MCF 10A (cell line): ENCODE measurements at regions of chr1 and their contacts with region 1.

Region 1: GRCh38 chr1:184982002-184982954 is 8.0 kb upstream of the NIBAN1 start:
- DNase-seq: peak; percentile 82
- H3K4me3 Mint-ChIP-seq: no peak overlapping the region
- H3K27ac Mint-ChIP-seq: no peak overlapping the region
- H3K4me1 Mint-ChIP-seq: no peaks in the 10 kb centered on the region
- H3K27me3 Mint-ChIP-seq: peaks cover 82% of the 10 kb centered on the region
- CTCF ChIP-seq: peak; percentile 97

Region 2: GRCh38 chr1:184754476-184755225 is 227.6 kb before region 1 on chr1 and contains the start of gene EDEM3:
- CTCF ChIA-PET with region 1: no interaction called
- POLR2A ChIA-PET with region 1: interaction called, 5 read pairs
- intact Hi-C with region 1: loop called (anchors 1 kb)
- DNase-seq: peak; percentile 100
- H3K4me3 Mint-ChIP-seq: peak within 1 kb of the TSS; percentile 93
- H3K27ac Mint-ChIP-seq: peak within 1 kb of the TSS; percentile 96
- H3K4me1 Mint-ChIP-seq: peaks cover 27% of the 10 kb centered on the region
- H3K27me3 Mint-ChIP-seq: no peaks in the 10 kb centered on the region
- CTCF ChIP-seq: no peak
- total RNA-seq, gene EDEM3: 58.3 and 63.5 TPM in 2 replicates

Region 3: DNA sequence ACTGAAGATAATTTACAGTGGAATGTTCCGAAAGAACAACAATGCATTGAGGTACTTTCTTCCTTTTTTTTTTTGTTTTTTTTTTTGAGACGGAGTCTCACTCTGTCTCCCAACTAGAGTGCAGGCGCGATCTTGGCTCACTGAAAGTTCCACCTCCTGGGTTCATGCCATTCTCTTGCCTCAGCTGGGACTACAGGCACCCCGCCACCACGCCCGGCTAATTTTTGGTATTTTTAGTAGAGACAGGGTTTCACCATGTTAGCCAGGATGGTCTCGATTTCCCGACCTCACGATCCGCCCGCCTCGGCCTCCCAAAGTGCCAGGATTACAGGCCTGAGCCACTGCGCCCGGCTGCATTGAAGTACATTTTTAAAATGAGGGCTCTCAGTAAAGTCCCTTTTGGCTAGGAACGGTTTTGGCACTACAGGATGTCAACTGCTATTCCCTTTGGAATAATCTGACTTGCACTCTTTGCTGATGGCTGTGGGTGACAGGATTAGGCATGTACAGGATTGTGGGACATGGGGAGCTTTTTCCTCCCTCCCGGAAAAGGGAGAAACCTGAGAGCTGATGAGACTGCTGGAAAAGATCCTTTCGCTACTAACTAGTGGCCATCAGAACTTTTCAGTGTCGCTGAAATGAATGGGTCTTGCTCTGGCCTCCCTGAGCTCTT is 170.7 kb before region 1 on chr1:
- CTCF ChIA-PET with region 1: interaction called, 270 read pairs
- POLR2A ChIA-PET with region 1: interaction called, 15 read pairs
- intact Hi-C with region 1: no loop called
- DNase-seq: no peak
- H3K4me3 Mint-ChIP-seq: no peak overlapping the region
- H3K27ac Mint-ChIP-seq: no peak overlapping the region
- H3K4me1 Mint-ChIP-seq: no peaks in the 10 kb centered on the region
- H3K27me3 Mint-ChIP-seq: peaks cover 37% of the 10 kb centered on the region
- CTCF ChIP-seq: no peak

Region 4: DNA sequence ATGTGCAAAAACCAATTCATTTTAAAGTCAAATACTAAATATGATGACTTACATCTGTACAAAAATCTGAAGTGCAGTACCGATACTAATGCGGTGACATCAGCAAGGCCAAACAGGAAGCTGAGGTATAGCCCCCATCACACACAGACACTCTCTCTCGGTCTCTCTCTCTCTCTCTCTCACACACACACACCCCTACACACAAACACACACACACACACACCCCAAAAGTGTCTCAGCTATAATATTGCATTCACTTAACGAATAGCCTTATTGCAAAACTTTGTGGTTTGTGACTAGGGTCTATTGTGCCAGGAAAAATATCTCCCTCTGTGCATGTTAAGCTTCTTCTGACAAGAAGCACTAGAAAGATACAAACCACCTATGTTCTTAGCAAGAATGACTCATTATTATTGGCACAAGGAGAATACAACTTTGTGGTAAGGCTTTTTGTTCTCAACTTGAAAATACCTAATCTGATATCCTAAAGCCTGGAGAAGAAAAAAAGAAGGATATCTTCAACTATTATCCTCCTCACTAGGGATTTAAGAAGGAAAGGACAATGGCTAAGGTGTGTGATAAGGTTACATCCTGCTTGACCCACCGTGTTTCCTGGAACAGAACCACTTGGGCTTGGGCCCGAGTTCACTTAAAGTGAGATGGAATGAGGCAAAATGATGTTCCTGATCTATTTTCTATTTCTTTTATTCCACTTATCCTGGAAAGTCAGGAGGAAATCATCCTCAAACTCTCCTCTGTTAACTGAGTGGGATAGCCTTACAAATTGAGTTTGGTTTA is 115.1 kb before region 1 on chr1:
- CTCF ChIA-PET with region 1: interaction called, 10 read pairs
- POLR2A ChIA-PET with region 1: no interaction called
- intact Hi-C with region 1: no loop called
- DNase-seq: peak; percentile 98
- H3K4me3 Mint-ChIP-seq: no peak overlapping the region
- H3K27ac Mint-ChIP-seq: no peak overlapping the region
- H3K4me1 Mint-ChIP-seq: peaks cover 8% of the 10 kb centered on the region
- H3K27me3 Mint-ChIP-seq: peaks cover 100% of the 10 kb centered on the region
- CTCF ChIP-seq: no peak

Region 5: GRCh38 chr1:184954231-184954995 is 27.9 kb before region 1 on chr1:
- CTCF ChIA-PET with region 1: interaction called, 17 read pairs
- POLR2A ChIA-PET with region 1: no interaction called
- intact Hi-C with region 1: no loop called
- DNase-seq: peak; percentile 21
- H3K4me3 Mint-ChIP-seq: no peak overlapping the region
- H3K27ac Mint-ChIP-seq: no peak overlapping the region
- H3K4me1 Mint-ChIP-seq: peaks cover 10% of the 10 kb centered on the region
- H3K27me3 Mint-ChIP-seq: peaks cover 23% of the 10 kb centered on the region
- CTCF ChIP-seq: no peak

Region 6: DNA sequence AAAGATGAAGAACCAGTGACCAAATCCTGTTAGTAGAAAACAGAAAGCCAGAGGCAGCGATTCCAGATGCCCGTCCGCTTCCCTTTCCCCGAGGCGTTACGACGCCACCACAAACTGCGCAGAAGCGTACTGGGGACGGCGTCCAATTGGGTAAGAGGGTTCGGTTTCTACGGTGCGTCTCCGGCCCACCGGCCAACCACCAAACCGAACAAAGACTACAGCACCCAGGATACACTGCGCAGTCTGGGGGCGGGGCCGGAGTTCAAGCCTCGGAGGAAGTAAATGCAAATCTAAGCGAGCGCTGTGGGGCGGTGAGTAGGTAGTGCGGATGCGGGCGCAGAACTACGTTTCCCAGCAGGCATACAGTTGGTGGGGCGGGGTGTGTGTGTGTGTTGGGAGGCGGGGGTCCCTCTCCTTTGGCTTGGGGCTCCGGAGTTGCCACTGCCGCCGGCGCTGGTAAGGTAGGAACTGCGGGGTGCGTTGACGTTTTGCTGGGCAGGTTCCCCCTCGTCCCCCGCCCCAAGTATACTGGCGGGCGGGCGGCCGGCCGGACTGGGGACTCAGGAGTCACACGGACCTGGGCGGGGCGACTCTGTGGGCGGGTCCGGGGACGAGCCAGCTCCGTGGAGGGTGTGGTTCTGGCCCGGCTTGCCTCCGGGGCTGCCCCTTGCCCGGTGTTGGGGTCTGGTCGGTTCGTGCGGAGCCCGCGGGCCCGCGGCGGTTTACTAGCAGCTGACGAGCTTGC is 174.7 kb after region 1 on chr1 and contains the starts of genes SWT1 and TRMT1L:
- CTCF ChIA-PET with region 1: interaction called, 6 read pairs
- POLR2A ChIA-PET with region 1: no interaction called
- intact Hi-C with region 1: loop called (anchors 5 kb)
- DNase-seq: peak; percentile 100
- H3K4me3 Mint-ChIP-seq: peak within 1 kb of the TSS; percentile 83
- H3K27ac Mint-ChIP-seq: peak within 1 kb of the TSS; percentile 98
- H3K4me1 Mint-ChIP-seq: peaks cover 40% of the 10 kb centered on the region
- H3K27me3 Mint-ChIP-seq: no peaks in the 10 kb centered on the region
- CTCF ChIP-seq: no peak
- total RNA-seq, gene SWT1: 2.1 and 6.1 TPM in 2 replicates
- total RNA-seq, gene TRMT1L: 23.4 and 29.3 TPM in 2 replicates

Region 7: DNA sequence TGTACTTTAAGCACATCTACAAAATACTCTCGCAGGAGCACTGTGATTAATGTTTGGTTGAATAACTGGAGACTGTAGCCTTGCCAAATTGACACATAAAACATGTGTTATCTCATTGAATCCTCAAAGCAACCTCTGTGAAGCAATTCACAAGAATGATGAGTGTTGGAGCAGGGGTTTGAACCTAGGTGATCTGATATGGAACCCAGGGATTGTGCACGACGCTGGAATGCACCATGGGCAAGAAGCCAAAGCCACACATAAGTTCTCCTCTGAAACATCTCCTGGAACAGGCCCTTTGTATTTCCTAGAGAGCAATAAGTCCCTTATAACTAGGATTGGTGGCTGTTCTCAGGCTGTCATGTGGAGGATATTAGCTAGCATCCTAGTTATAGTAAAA is 459.3 kb after region 1 on chr1:
- CTCF ChIA-PET with region 1: no interaction called
- POLR2A ChIA-PET with region 1: no interaction called
- intact Hi-C with region 1: no loop called
- DNase-seq: peak; percentile 74
- H3K4me3 Mint-ChIP-seq: no peak overlapping the region
- H3K27ac Mint-ChIP-seq: no peak overlapping the region
- H3K4me1 Mint-ChIP-seq: peaks cover 10% of the 10 kb centered on the region
- H3K27me3 Mint-ChIP-seq: no peaks in the 10 kb centered on the region
- CTCF ChIP-seq: no peak

Region 8: DNA sequence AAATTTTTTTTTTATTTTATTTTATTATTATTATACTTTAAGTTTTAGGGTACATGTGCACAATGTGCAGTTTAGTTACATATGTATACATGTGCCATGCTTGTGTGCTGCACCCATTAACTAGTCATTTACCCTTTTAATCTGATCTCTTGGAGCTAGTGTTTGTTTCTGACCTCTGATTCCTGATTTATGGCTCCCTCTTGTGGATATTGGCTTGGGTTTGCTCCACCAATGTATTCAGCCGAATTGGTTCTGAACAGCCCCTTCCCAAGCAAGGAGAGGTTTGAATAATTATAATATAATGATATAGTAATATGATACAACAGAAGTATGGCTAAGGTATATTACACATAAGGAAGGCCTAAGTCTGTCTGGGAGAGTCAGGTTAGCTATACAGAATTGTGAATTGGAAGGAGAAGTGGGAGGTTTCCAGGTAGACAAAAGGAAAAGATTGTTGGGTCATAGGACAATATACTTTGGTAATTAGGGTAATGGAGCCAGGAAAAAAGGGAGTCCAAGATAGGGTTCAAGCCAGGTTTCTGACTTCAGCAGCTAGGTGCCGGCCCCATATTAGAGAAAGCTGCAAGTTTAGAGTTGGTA is 698.9 kb after region 1 on chr1:
- CTCF ChIA-PET with region 1: interaction called, 6 read pairs
- POLR2A ChIA-PET with region 1: no interaction called
- intact Hi-C with region 1: loop called (anchors 5 kb)
- DNase-seq: peak; percentile 81
- H3K4me3 Mint-ChIP-seq: no peak overlapping the region
- H3K27ac Mint-ChIP-seq: no peak overlapping the region
- H3K4me1 Mint-ChIP-seq: no peaks in the 10 kb centered on the region
- H3K27me3 Mint-ChIP-seq: no peaks in the 10 kb centered on the region
- CTCF ChIP-seq: peak; percentile 60